Cardiac septum (tissue), 1 donor: ENCODE measurements at regions of chr7 and their contacts with region 1.

Region 1: DNA sequence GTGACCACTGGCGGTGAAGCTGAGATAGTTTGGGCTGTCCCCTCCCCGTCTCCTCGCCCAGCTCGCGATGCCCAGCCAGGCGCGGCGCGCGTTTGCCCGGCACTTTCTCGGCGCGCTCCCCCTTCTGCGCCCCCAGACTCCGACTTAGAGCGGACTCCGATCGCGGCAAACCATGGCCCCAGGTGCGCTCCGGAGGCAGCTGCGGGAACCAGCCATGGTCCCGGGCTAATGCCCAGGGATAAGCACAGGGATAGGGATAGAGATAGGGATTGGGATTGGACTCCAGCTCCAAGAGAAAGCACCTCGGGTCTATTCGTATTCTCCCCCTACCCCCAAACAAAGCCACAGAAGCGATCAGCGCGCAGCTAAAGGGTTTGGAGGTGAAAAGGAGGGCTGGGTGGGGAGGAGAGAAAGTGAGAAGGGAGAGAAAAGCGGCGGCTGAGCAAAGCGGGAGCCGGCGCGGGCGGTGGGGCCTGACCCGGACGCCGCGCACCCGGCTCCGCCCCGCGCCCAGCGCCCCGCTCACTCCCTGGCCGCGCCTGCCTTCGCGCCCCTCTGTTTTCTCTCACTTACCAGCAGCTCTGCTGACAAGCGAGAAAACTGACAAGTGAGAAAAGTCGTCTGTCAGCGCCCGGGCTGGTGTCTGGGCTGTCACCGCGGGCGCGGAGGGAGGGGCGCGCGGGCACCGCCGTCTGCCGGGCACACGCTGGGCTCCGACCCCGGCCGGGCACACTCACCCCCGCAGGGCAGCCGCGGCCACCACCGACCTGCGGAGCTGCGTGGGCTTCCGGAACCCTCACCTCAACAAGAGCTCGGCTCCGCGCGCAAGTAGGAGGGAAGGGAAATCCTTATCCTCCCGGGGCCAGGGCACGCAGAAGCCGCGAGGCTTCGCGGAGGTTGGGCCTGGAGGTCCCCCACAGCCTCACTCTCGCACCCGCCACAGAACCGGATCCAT is at the start of gene PDE1C:
- DNase-seq: peak; percentile 86
- total RNA-seq, gene PDE1C: 220 TPM

Region 2: DNA sequence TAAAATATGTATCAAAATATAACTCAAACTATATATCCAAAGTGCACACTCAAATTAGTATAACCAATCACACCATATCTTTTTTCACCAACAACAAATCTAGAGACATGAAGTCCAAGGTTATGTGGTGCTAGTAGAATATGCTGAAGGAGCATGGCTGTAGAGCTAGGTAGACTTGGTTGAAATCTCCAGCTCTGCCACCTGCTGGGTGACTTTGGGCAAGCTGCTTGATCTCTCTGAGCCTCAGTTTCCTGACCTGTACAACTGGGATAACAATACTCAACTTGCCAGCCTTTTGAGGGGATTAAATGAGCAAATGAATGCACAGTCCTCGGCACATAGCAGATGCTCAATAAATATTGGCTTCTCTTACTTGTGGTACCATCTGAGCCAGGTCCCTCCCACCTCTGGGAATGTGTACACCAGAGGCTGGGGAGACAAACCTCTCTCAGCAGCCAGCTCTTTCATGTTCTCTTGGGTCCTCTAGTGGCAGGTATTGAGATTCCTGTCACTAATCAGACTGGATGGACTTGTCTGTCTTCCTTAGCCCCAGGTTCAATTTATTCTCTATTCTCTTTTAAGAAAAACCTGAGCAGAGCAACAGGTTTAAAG is 93.8 kb after region 1 on chr7:
- intact Hi-C with region 1: loop called (anchors 2 kb)
- DNase-seq: no peak